H1 (cell line): ENCODE measurements at regions of chr4 and their contacts with region 1.

Region 1: GRCh38 chr4:176044589-176044951 is 21.1 kb upstream of the WDR17 start:
- DNase-seq: no peak
- H3K4me3 ChIP-seq: no peak overlapping the region
- H3K27ac ChIP-seq: no peak overlapping the region
- H3K4me1 ChIP-seq: no peaks in the 10 kb centered on the region
- H3K27me3 ChIP-seq: no peaks in the 10 kb centered on the region; a peak in 1 of 7 replicates
- CTCF ChIP-seq: no peak
- EP300 ChIP-seq: no peak
- POLR2A ChIP-seq: no peak
- RAD21 ChIP-seq: no peak

Region 2: GRCh38 chr4:175790083-175790482 is 254.5 kb before region 1 on chr4:
- CTCF ChIA-PET with region 1: no interaction called
- POLR2A ChIA-PET with region 1: no interaction called
- DNase-seq: no peak
- H3K4me3 ChIP-seq: no peak overlapping the region
- H3K27ac ChIP-seq: no peak overlapping the region
- H3K4me1 ChIP-seq: peaks cover 0 to 10% (median 2%) of the 10 kb centered on the region in 4 experiments; a peak in 2 of 7 replicates
- H3K27me3 ChIP-seq: no peaks in the 10 kb centered on the region
- CTCF ChIP-seq: no peak
- EP300 ChIP-seq: no peak
- POLR2A ChIP-seq: no peak
- RAD21 ChIP-seq: no peak

Region 3: GRCh38 chr4:176034499-176034898 is 10.1 kb before region 1 on chr4:
- CTCF ChIA-PET with region 1: interaction called, 14 read pairs
- POLR2A ChIA-PET with region 1: no interaction called
- DNase-seq: no peak
- H3K4me3 ChIP-seq: no peak overlapping the region
- H3K27ac ChIP-seq: no peak overlapping the region
- H3K4me1 ChIP-seq: no peaks in the 10 kb centered on the region
- H3K27me3 ChIP-seq: no peaks in the 10 kb centered on the region
- CTCF ChIP-seq: peak in 2 of 3 experiments; percentile 30 to 32; a peak in 2 of 4 replicates
- EP300 ChIP-seq: no peak
- POLR2A ChIP-seq: no peak
- RAD21 ChIP-seq: peak; percentile 74 to 80

Region 4: DNA sequence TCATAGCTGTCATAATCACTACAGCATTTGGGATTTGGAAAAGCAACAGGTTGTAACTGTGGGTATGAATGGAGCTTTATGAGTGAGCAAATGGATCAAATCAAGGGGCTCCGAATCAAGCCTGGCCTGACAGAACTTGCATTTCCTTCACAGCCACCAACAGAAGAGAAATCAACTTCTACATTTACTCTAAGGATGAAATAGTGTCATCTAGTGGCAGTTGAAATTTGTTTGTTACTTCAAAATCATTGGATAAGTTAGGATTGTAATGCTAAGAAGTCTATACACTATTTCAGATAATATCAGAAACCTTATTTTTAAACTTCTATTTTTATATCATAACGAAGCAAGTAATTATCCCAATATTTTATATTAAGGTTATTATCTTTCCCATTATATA is 10.4 kb after region 1 on chr4:
- CTCF ChIA-PET with region 1: interaction called, 12 read pairs
- POLR2A ChIA-PET with region 1: no interaction called
- DNase-seq: no peak
- H3K4me3 ChIP-seq: no peak overlapping the region
- H3K27ac ChIP-seq: no peak overlapping the region
- H3K4me1 ChIP-seq: no peaks in the 10 kb centered on the region
- H3K27me3 ChIP-seq: no peaks in the 10 kb centered on the region
- CTCF ChIP-seq: peak in 1 of 3 experiments; percentile 25; a peak in 1 of 4 replicates
- EP300 ChIP-seq: no peak
- POLR2A ChIP-seq: no peak
- RAD21 ChIP-seq: peak; percentile 49 to 52

Region 5: DNA sequence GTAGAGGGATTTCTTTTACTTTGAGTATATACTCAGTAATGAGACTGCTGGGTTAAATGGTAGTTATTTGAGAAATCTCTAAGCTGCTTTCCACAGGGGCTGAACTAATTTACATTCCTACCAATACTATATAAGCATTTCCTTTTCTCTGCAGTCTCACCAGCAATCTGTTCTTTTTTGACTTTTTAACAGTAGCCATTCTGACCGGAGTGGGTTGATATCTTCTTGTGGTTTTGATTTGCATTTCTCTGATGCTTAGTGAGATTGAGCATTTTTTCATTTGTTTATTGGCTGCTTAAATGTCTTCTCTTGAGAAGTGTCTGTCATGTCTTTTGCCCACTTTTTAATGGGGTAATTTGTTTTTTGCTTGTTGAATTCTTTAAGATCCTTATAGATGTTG is 318.5 kb after region 1 on chr4:
- CTCF ChIA-PET with region 1: no interaction called
- POLR2A ChIA-PET with region 1: no interaction called
- DNase-seq: no peak
- H3K4me3 ChIP-seq: no peak overlapping the region
- H3K27ac ChIP-seq: no peak overlapping the region
- H3K4me1 ChIP-seq: peaks cover 0 to 8% (median 3%) of the 10 kb centered on the region in 4 experiments; a peak in 3 of 7 replicates
- H3K27me3 ChIP-seq: no peaks in the 10 kb centered on the region
- CTCF ChIP-seq: no peak
- EP300 ChIP-seq: no peak
- POLR2A ChIP-seq: no peak
- RAD21 ChIP-seq: no peak